BJ (cell line): ENCODE measurements at regions of chr3 and their contacts with region 1.

Region 1: GRCh38 chr3:8730656-8731055 is 2.9 kb upstream of the CAV3 start:
- DNase-seq: no peak
- H3K4me3 ChIP-seq: no peak overlapping the region
- H3K27me3 ChIP-seq: no peaks in the 10 kb centered on the region
- CTCF ChIP-seq: no peak

Region 2: GRCh38 chr3:8095724-8096123 is 634.9 kb before region 1 on chr3:
- CTCF ChIA-PET with region 1: no interaction called
- POLR2A ChIA-PET with region 1: no interaction called
- DNase-seq: no peak
- H3K4me3 ChIP-seq: no peak overlapping the region
- H3K27me3 ChIP-seq: no peaks in the 10 kb centered on the region
- CTCF ChIP-seq: no peak

Region 3: GRCh38 chr3:8336456-8336855 is 394.2 kb before region 1 on chr3:
- CTCF ChIA-PET with region 1: no interaction called
- POLR2A ChIA-PET with region 1: no interaction called
- DNase-seq: no peak
- H3K4me3 ChIP-seq: no peak overlapping the region
- H3K27me3 ChIP-seq: no peaks in the 10 kb centered on the region
- CTCF ChIP-seq: peak; percentile 27; the same call in 1 of the 2 replicates

Region 4: DNA sequence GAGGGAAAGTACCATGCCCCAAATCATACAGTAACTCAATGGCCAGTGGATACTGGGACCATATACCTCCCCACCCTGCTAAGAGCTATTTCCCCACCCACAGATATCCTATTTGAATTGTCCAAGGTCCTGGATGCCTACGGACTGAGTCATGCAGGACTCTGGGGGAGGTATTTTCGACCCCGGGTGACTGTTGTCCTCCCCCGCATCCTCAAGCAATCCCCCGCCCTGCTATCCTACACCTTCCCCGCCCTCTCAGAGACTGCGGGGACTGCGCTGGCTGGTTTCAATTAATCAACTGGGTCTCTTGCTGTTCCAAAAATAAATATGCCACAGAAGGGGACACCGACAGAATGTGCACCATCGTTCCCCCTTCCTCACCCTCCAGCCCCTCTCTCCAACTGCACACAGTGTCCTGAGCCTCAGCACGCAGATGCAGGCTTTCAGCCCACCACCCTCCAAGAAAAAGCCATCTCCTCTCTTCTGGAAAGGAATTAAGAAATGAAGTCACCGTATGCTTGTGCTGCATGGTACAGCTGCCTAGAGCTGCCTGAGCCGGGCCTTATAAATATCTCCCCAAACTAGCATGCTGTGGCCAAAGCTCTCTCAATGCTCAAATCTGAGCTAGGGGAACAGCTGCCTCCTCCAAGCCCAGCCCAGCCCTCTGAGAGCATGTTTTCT is 11.1 kb after region 1 on chr3:
- CTCF ChIA-PET with region 1: interaction called, 19 read pairs
- POLR2A ChIA-PET with region 1: no interaction called
- DNase-seq: peak; percentile 62
- H3K4me3 ChIP-seq: peak overlapping the region; percentile 7; the same call in 1 of the 2 replicates
- H3K27me3 ChIP-seq: no peaks in the 10 kb centered on the region
- CTCF ChIP-seq: no peak

Region 5: DNA sequence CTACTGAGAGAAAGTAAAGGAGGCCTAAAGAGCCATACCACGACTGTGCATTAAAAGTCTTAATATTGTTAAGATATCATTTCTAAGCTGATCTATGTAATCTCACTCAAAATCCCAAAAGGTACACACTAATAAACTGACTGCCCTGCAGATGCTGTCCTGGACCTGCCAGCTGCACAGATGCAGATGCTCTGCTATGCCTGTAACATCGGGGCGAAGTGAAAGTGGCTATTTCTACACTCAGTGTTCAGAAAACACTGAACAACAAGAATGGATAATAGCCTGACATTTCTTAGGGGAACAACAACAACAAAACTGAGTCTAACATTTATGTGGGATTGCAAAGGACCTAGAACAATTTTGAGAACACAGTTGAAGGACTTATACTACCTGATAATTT is 200.7 kb after region 1 on chr3:
- CTCF ChIA-PET with region 1: no interaction called
- POLR2A ChIA-PET with region 1: no interaction called
- DNase-seq: no peak
- H3K4me3 ChIP-seq: peak overlapping the region; percentile 4; the same call in 1 of the 2 replicates
- H3K27me3 ChIP-seq: no peaks in the 10 kb centered on the region
- CTCF ChIP-seq: no peak